WTC11 (cell line): ENCODE measurements at regions of chr12 and their contacts with region 1.

Region 1: GRCh38 chr12:6723607-6724396 is at the start of gene COPS7A:
- DNase-seq: peak; percentile 98
- ATAC-seq: peak; percentile 98
- H3K4me3 Mint-ChIP-seq: peak within 1 kb of the TSS; percentile 88
- H3K27ac Mint-ChIP-seq: peak within 1 kb of the TSS; percentile 98
- H3K4me1 Mint-ChIP-seq: peaks cover 11% of the 10 kb centered on the region
- H3K27me3 Mint-ChIP-seq: peaks cover 16% of the 10 kb centered on the region
- CTCF ChIP-seq: no peak
- total RNA-seq, gene COPS7A: 41.2 to 43.8 TPM (median 41.4 TPM) in 3 replicates

Region 2: DNA sequence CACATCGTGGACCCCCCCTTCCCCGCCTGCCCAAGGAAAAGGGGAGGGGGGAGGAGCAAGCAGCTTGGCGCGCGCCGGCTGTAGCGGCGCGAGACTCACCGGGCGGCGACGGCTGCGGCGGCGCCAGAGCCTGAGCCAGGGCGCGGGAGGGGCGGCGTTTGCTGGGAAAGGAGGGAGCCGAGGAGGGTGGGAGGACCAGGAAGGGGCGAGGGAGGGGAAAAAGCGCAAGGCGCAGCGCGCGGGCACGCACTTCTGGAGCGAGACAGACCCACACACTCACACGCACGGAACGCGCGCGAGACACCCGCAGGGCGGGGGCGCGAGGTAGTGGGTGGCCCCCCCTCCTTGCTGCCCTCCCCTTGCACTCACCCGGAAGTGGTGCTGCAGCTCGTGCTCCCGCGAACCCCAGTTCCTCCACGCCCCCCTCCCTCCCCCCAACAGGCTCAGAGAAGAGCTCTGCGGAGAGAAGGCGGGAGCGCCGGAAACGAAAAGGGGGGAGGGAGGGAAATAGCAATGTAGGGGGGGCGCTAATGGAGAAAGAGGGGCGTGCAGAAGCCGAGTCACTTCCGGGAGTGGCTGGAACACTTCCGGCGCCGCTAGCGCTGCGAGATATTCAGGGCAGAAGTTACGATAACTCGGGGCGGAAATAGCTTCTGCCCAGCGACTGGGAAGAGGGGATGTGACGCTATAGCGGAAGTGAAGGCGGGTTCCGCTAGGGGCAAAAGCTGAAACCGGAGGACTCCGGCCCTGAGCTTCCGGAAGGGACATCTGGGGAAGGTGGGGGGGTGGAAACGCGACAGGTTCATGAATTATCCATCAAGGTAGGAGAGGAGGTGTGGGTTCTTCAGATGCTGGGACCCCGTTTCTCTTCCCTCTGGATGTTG is 34.6 kb before region 1 on chr12 and contains the start of gene ZNF384:
- CTCF ChIA-PET with region 1: interaction called, 25 read pairs
- POLR2A ChIA-PET with region 1: interaction called, 39 read pairs
- DNase-seq: peak; percentile 95
- ATAC-seq: peak; percentile 81
- H3K4me3 Mint-ChIP-seq: peak within 1 kb of the TSS; percentile 86
- H3K27ac Mint-ChIP-seq: peak within 1 kb of the TSS; percentile 95
- H3K4me1 Mint-ChIP-seq: peaks cover 23% of the 10 kb centered on the region
- H3K27me3 Mint-ChIP-seq: 0 out of 2 replicates have a peak, but pooled peaks cover under 1% of the 10 kb centered on the region
- CTCF ChIP-seq: no peak
- total RNA-seq, gene ZNF384: 63.8 to 64.7 TPM (median 64.4 TPM) in 3 replicates

Region 3: GRCh38 chr12:6697584-6698351 is 26.0 kb before region 1 on chr12:
- CTCF ChIA-PET with region 1: interaction called, 13 read pairs
- POLR2A ChIA-PET with region 1: no interaction called
- DNase-seq: peak; percentile 71
- ATAC-seq: peak; percentile 78
- H3K4me3 Mint-ChIP-seq: peak overlapping the region; percentile 29; the same call in 1 of the 2 replicates
- H3K27ac Mint-ChIP-seq: no peak overlapping the region; the same call in 1 of the 2 replicates
- H3K4me1 Mint-ChIP-seq: peaks cover 25% of the 10 kb centered on the region
- H3K27me3 Mint-ChIP-seq: peaks cover 43% of the 10 kb centered on the region
- CTCF ChIP-seq: peak; percentile 36; the same call in 1 of the 2 replicates

Region 4: DNA sequence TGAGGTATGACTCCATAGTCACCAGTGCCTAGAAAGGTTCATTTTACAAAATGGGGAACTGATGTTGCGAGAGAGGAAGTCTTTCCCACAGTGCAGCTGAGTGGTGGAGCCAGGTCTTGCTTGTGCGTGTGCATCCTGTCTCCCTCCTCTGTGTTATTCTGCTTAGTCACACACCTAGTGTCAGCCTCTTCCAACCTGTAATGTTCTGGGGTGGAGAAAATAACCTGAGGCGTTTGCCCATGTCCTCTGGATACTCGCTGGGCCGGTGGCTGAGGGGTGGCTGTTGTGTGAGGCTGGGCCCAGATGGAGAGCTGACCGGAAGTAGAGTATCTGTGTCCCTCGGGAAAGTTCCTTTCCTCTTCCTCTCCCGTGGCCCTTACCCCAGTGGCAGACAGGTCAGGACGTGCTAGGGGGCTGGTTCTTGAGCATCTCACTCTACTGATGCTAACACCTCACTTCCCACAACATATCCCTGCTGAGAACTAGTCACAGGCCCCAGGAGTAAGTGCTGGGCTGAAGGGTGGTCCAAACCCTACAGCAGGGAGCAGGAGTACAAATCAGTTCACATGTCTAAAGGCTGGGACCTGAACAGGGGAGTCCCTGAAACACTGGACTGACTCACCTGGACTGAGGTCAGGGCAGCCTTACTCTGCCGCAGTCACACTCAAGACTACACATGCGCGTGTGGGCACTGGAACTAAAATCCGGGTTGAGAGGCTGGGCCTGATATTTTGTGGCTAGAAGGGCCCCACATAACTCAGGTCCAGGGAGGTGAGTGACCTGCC is 22.1 kb after region 1 on chr12:
- CTCF ChIA-PET with region 1: no interaction called
- POLR2A ChIA-PET with region 1: no interaction called
- DNase-seq: no peak
- ATAC-seq: no peak
- H3K4me3 Mint-ChIP-seq: no peak overlapping the region
- H3K27ac Mint-ChIP-seq: peak overlapping the region; percentile 36; the same call in 1 of the 2 replicates
- H3K4me1 Mint-ChIP-seq: no peaks in the 10 kb centered on the region
- H3K27me3 Mint-ChIP-seq: no peaks in the 10 kb centered on the region
- CTCF ChIP-seq: no peak

Region 5: GRCh38 chr12:6833189-6833890 is 109.5 kb after region 1 on chr12:
- CTCF ChIA-PET with region 1: interaction called, 11 read pairs
- POLR2A ChIA-PET with region 1: no interaction called
- DNase-seq: no peak
- ATAC-seq: no peak
- H3K4me3 Mint-ChIP-seq: no peak overlapping the region
- H3K27ac Mint-ChIP-seq: no peak overlapping the region
- H3K4me1 Mint-ChIP-seq: peaks cover 18% of the 10 kb centered on the region
- H3K27me3 Mint-ChIP-seq: no peaks in the 10 kb centered on the region
- CTCF ChIP-seq: no peak

Region 6: DNA sequence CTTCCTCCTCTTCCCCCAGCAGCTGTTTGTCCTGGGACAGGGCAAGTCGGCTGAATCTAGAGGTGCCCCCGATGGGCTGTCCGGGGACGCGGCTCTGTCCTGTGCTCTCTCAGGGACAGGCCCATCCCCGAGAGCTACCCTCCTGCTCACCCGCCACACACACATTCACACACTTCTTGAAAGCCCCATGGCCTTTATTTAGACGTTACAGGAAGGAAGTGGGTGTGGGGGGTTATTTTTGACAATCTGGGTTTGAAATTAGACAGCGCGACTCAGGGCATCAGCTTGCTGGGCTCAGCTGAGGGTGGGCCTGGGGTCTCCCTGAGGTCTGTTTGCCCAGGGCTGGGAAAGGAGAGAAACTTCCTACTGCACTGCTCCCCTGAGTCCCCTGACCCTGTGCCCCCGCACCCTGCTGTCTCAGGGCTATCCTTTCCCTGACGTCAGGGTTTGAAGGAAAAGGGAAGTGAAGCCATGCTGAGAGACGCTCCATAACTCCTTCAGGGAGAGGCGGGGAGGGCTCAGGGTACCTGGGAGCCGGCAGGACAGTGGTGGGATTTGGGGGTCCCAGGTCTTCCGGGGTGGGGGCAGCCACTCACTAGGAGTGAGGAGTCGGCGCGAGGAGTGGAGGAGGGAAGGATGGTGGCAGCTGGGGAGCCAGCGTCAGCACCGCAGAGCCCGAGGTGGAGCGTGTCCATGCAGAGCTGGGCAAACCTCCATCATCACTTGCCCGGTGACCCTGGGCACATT is 235.4 kb after region 1 on chr12:
- CTCF ChIA-PET with region 1: interaction called, 3 read pairs
- POLR2A ChIA-PET with region 1: interaction called, 13 read pairs
- DNase-seq: no peak
- ATAC-seq: no peak
- H3K4me3 Mint-ChIP-seq: no peak overlapping the region
- H3K27ac Mint-ChIP-seq: no peak overlapping the region
- H3K4me1 Mint-ChIP-seq: peaks cover 37% of the 10 kb centered on the region
- H3K27me3 Mint-ChIP-seq: no peaks in the 10 kb centered on the region
- CTCF ChIP-seq: no peak